Right ventricle myocardium superior (tissue), 1 donor: ENCODE measurements at regions of chr2 and their contacts with region 1.

Region 1: DNA sequence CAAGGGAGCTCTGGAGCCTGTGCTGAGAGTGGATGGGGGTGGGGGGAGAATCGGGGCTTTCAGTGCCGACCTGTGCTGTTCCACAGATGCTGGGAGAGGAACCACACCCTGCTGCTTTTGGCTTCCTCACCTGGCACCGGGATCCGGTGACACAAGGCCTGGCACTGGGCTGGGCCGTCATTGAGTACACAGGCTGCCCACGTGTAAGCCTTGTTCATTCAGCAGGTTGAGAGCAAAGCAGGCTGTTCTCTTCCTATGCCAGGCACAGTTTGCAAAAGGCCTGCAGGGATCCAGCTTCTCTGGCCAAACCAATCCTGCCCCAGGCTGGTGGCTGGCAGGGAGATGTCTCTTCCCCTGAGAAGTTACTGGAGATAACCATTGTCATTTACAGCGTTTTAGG is 17.1 kb downstream of the TRIB2 start:
- DNase-seq: peak; percentile 81
- ATAC-seq: peak; percentile 76

Region 2: GRCh38 chr2:12807907-12808810 is 74.3 kb after region 1 on chr2:
- intact Hi-C with region 1: loop called (anchors 5 kb)
- DNase-seq: no peak
- ATAC-seq: peak; percentile 77